Aorta (tissue), 5 donors: ENCODE measurements at regions of chr3 and their contacts with region 1.

Region 1: DNA sequence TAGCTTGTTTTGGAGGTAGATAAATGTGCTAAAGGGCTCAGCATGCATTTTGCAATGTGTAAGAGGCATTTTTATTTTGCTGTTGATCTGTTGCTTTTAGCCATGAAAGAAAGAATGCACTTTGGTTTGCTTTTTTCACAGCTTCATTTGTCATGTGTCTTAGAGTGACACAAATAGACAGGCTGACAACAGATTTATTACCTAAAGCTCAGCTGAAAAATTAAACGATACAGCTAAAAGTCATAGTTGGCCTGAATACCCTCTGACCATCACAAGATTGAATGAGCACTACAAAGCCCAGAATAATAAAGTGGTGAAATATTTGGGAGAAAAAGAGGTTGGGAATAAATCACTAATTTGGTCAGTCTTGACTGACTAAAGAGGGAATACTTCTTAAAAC is 723.1 kb downstream of the CADM2 start:
- DNase-seq: no peak
- ATAC-seq: no peak
- H3K4me3 ChIP-seq: no peak overlapping the region
- H3K27ac ChIP-seq: no peak overlapping the region
- H3K4me1 ChIP-seq: no peaks in the 10 kb centered on the region
- H3K27me3 ChIP-seq: no peaks in the 10 kb centered on the region

Region 2: GRCh38 chr3:85525264-85525663 is 156.6 kb before region 1 on chr3:
- intact Hi-C with region 1: no loop called
- DNase-seq: no peak
- ATAC-seq: no peak
- H3K4me3 ChIP-seq: no peak overlapping the region
- H3K27ac ChIP-seq: no peak overlapping the region
- H3K4me1 ChIP-seq: no peaks in the 10 kb centered on the region
- H3K27me3 ChIP-seq: peaks cover 0 to 2% of the 10 kb centered on the region in 2 donors

Region 3: DNA sequence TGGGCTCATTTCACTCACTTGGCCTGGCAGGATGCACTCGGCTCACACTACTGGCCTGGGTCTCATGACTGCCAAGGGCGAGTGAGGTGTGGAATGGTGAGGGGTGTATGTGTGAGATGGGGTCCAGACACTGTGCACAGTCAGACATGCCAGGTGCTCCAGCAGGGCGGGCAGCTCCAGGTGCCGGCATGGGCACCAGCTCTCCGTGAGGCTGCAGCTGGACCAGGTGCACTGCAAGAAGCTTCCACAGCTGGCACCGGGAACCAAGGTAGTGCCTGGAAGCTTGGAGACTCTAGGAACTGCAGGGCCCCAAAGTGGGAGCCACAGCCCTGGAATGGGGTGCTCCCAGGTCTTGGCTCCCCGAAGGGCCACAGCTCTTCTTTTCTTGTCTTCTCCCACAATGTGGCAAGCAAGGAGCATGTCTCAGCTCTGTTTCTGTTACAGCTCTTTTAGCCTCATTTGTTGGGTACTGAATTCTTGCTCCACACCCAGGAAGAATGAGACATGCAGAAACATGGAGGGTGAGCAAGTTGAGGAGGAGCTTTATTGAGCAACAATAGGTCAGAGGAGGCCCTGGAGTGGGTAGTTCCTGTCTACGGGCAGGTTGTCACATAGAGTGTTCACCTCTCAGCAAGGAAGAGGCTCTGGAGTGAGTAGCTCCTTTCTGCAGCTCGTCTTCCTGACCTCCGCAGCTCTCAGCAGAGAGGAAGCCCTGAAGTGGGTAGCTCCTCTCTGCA is 39.7 kb after region 1 on chr3:
- intact Hi-C with region 1: loop called in 1 of 2 experiments (anchors 2 kb)
- DNase-seq: peak in 1 of 2 donors; percentile 41
- ATAC-seq: no peak
- H3K4me3 ChIP-seq: no peak overlapping the region
- H3K27ac ChIP-seq: no peak overlapping the region
- H3K4me1 ChIP-seq: no peaks in the 10 kb centered on the region
- H3K27me3 ChIP-seq: no peaks in the 10 kb centered on the region